ENCODE measurements at regions of chrX and their contacts with region 1.

Region 1: DNA sequence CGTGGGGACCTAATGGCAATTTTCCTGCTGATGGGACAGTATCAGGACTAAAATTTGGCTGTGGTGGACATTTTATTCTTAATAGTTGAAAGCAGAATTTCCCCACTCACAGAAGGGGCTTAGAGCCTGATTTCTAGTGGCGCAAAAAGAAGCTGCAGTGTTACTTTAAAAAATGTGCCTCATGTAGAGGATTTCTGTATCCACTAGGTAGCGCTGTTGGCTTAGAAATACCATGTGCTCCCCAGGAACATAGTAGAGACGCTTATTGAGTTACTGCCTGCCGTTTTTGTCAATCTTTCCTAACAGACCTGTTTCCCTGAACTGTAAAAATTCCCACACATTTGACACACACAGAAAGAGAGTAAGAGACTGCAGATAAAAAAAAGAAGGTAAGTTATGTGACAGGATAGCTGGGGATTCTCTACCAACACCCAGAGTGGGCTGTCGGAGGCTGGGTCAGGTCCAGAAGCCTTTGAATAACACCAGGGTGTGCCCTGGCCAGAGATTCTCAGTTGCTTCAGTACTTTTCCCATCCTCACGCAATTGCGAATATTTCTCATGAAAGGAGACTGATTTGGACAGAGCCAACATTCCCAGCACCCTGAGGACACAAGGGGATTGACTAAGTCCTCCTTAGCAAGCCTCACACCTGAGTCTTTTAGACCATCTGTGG is 88.4 kb downstream of the ZXDA start:
- DNase-seq: peak; percentile 18 to 60 (median 41)
- H3K4me3 ChIP-seq: peak overlapping the region in 1 of 4 donors; percentile 38
- H3K27ac ChIP-seq: no peak overlapping the region
- H3K4me1 ChIP-seq: no peaks in the 10 kb centered on the region
- H3K27me3 ChIP-seq: peaks cover 14% of the 10 kb centered on the region
- CTCF ChIP-seq: peak; percentile 52 to 89 (median 79)
- POLR2A ChIP-seq: no peak

Region 2: GRCh38 chrX:57929373-57929772 is 107.5 kb after region 1 on chrX:
- intact Hi-C with region 1: loop called (anchors 2 to 10 kb)
- DNase-seq: no peak
- H3K4me3 ChIP-seq: no peak overlapping the region
- H3K27ac ChIP-seq: no peak overlapping the region
- H3K4me1 ChIP-seq: no peaks in the 10 kb centered on the region
- H3K27me3 ChIP-seq: no peaks in the 10 kb centered on the region
- CTCF ChIP-seq: peak; percentile 27 to 54 (median 50)
- POLR2A ChIP-seq: no peak

Region 3: GRCh38 chrX:58025979-58026378 is 204.1 kb after region 1 on chrX:
- intact Hi-C with region 1: loop called in 1 of 2 experiments (anchors 5 kb)
- DNase-seq: peak; percentile 22 to 57 (median 34)
- H3K4me3 ChIP-seq: no peak overlapping the region
- H3K27ac ChIP-seq: no peak overlapping the region
- H3K4me1 ChIP-seq: no peaks in the 10 kb centered on the region
- H3K27me3 ChIP-seq: peaks cover 4% of the 10 kb centered on the region
- CTCF ChIP-seq: peak; percentile 13 to 61 (median 48)
- POLR2A ChIP-seq: no peak